Right ventricle myocardium inferior (tissue), 1 donor: ENCODE measurements at regions of chr9 and their contacts with region 1.

Region 1: DNA sequence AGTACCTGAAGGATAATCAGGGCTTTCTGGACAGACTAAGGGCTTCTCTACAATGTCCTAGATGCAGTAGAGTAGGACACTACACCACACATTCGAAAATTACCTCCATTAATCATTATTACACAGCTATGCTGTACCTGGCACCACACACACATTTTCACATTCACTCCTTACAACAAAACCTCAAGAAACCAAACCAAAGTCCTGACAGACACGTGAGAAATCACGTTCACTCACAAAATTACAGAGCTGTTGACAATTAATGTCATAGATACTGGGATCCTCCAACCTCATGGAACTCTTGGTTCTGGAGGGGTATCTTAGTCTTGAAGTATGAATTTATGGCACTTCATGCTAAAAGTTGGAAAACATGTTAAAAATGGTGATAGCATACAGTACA is 16.3 kb downstream of the UBQLN1 start:
- DNase-seq: no peak
- ATAC-seq: no peak

Region 2: DNA sequence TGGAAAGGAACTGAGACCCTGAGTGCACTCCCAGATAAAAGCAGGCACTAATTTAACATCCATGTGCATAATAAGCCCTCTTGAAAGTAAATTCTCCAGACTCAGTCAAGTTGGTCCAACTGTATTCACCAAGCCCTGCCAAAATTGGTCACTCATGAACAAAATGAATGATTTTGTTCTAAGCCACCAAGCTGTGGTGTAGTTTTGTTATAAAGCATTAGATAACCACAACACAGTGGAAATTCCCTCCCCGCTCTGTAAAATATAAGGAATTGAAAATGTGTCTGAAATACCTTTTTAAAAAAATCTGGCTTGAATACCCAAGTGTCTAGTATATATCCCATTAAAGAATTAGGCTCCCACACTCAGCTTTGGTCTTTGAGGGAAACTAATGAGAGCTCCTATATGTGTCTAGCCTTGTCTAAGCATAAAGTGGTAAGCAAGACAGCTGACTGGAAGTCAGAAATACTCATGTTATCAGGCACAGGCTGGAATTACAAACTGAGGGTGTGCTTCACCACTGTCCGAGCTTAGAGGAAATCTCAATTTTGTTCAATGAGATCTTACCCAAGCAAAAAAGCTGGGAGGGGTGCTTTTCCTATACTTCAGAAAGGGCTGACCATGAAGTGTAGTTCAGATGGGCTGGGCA is 35.3 kb before region 1 on chr9:
- intact Hi-C with region 1: loop called (anchors 5 kb)
- DNase-seq: no peak
- ATAC-seq: no peak